Activated CD4-positive, alpha-beta T cell treated with anti-CD3 and anti-CD28 coated beads, Interleukin-2, amount 10 ng/mL, durations not matched to agents 7 days and 5 days (primary cell): ENCODE measurements at regions of chr19 and their contacts with region 1.

Region 1: GRCh38 chr19:39970675-39971379 is at the start of gene PSMC4:
- DNase-seq: peak; percentile 99
- H3K4me3 Mint-ChIP-seq: peak within 1 kb of the TSS; percentile 93
- H3K27ac Mint-ChIP-seq: peak within 1 kb of the TSS; percentile 99
- H3K4me1 Mint-ChIP-seq: peaks cover 56% of the 10 kb centered on the region
- H3K27me3 Mint-ChIP-seq: no peaks in the 10 kb centered on the region
- total RNA-seq, gene PSMC4: 108 to 122 TPM

Region 2: DNA sequence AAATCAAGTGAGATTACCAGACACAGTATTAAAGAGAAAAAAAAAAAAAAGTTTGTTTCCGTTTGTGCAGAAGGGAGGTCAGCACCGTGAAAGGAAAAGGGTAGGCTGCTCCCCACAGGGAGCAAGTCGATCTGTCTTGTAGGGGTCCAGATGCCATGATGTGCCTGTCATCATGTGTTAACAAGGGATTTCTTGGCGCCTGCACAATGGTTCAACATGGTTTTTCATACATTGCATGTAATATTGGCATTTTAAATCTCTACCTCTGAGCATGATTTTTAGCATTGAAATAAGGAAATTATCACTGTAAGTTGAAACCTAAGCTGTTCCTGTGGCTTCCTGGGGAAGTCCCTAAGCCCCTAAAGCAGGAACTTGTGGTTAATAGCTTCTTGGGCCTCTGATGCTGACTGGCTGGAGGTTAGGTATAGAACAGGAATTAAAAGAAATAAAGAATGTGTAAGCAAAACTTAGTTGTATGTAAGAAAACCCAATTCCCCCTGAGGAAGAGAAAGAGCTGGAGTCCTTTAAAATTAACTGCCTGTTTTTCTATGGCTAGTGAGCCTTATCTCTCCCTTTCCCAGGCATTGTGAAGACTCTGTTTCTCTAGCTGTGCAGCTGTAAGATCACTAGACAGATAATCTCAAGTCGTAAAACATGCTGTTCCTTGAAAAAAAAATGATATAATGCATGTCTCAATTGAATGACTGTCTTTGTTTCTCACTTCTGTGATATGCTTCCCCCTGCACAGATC is 29.0 kb before region 1 on chr19:
- CTCF ChIA-PET with region 1: interaction called, 11 read pairs
- POLR2A ChIA-PET with region 1: interaction called, 7 read pairs
- DNase-seq: peak; percentile 66
- H3K4me3 Mint-ChIP-seq: peak overlapping the region; percentile 50
- H3K27ac Mint-ChIP-seq: peak overlapping the region; percentile 88
- H3K4me1 Mint-ChIP-seq: peaks cover 77% of the 10 kb centered on the region
- H3K27me3 Mint-ChIP-seq: no peaks in the 10 kb centered on the region

Region 3: DNA sequence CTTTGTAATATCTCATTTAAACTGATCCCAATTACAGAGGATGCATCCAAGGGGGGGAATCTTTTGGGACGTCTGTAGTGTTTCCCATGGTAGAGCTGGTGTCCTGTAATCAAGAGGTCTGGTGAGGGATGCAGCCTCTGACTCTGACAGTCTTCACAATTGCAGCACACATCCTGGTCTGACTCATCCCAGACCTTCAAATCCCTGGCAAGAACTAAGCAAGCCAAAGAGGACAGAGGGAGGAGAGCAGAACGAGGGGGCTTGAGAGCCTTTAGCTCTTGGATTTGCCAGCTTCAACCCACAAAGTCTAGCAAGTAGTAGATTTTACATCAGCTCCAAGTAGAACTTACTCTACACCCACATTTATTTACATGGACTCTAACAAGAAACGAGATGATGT is 19.1 kb before region 1 on chr19:
- CTCF ChIA-PET with region 1: interaction called, 14 read pairs
- POLR2A ChIA-PET with region 1: interaction called, 8 read pairs
- DNase-seq: no peak
- H3K4me3 Mint-ChIP-seq: peak overlapping the region; percentile 11
- H3K27ac Mint-ChIP-seq: peak overlapping the region; percentile 98
- H3K4me1 Mint-ChIP-seq: peaks cover 69% of the 10 kb centered on the region
- H3K27me3 Mint-ChIP-seq: no peaks in the 10 kb centered on the region